ENCODE measurements at regions of chr4 and their contacts with region 1.

Region 1: GRCh38 chr4:82352913-82353366 is 20.9 kb downstream of the HNRNPD start:
- DNase-seq: no peak
- ATAC-seq: no peak

Region 2: GRCh38 chr4:82284858-82285805 is 67.8 kb before region 1 on chr4:
- intact Hi-C with region 1: loop called (anchors 10 kb)
- DNase-seq: peak; percentile 99
- ATAC-seq: peak; percentile 99

Measured in Right ventricle myocardium superior (tissue), 1 donor.